CD8-positive, alpha-beta memory T cell (primary cell): ENCODE measurements at regions of chr14 and their contacts with region 1.

Region 1: DNA sequence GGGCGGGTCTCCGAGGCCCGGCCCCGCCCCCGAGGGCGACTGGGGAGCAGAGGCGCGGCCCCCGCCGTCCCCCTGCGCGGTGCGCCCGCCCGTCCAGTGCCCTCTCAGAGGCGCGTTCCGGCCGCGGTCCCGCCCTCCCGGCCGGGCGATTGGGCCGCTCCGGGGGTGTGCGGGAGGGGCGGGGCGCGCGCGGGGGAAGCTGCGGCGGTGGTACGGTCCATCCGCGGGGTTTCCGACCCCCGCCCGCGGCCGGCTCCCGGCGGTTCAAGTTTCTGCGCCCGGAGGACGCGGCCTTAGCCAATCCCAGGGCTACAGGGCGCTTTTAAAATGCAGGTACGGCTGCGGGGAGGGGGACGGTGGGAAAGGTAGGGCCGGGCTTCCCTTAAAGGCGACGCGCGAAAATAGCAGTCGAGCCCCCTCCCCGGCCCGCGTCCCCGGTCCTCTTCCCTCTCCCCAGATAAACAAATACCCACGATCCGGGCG is 317 bp upstream of the CCDC85C start:
- DNase-seq: peak; percentile 92 to 98 (median 96)
- H3K4me3 ChIP-seq: peak overlapping the region; percentile 66
- H3K4me3 Mint-ChIP-seq: peak overlapping the region; percentile 75 to 96 (median 91)
- H3K27ac ChIP-seq: peak overlapping the region; percentile 74
- H3K27ac Mint-ChIP-seq: peak overlapping the region; percentile 41 to 94 (median 90)
- H3K4me1 ChIP-seq: peaks cover 31% of the 10 kb centered on the region
- H3K4me1 Mint-ChIP-seq: peaks cover 30 to 38% (median 32%) of the 10 kb centered on the region in 3 donors
- H3K27me3 ChIP-seq: no peaks in the 10 kb centered on the region
- H3K27me3 Mint-ChIP-seq: no peaks in the 10 kb centered on the region

Region 2: GRCh38 chr14:99480917-99481744 is 123.2 kb before region 1 on chr14 and contains the start of gene CCNK:
- CTCF ChIA-PET with region 1: interaction called, 4 read pairs
- POLR2A ChIA-PET with region 1: interaction called, 18 read pairs
- DNase-seq: peak; percentile 100
- H3K4me3 ChIP-seq: peak within 1 kb of the TSS; percentile 91
- H3K4me3 Mint-ChIP-seq: peak within 1 kb of the TSS; percentile 97 to 100 (median 98)
- H3K27ac ChIP-seq: peak within 1 kb of the TSS; percentile 97
- H3K27ac Mint-ChIP-seq: peak within 1 kb of the TSS; percentile 95 to 99 (median 98)
- H3K4me1 ChIP-seq: peaks cover 41% of the 10 kb centered on the region
- H3K4me1 Mint-ChIP-seq: peaks cover 58 to 80% (median 70%) of the 10 kb centered on the region in 3 donors
- H3K27me3 ChIP-seq: no peaks in the 10 kb centered on the region
- H3K27me3 Mint-ChIP-seq: peaks cover 0 to 4% of the 10 kb centered on the region in 2 donors
- total RNA-seq, gene CCNK: 110 to 115 TPM

Region 3: GRCh38 chr14:99774556-99775307 is 170.4 kb after region 1 on chr14:
- CTCF ChIA-PET with region 1: no interaction called
- POLR2A ChIA-PET with region 1: no interaction called
- DNase-seq: no peak
- H3K4me3 ChIP-seq: no peak overlapping the region
- H3K4me3 Mint-ChIP-seq: no peak overlapping the region
- H3K27ac ChIP-seq: no peak overlapping the region
- H3K27ac Mint-ChIP-seq: peak overlapping the region in 1 of 8 donors; percentile 43
- H3K4me1 ChIP-seq: no peaks in the 10 kb centered on the region
- H3K4me1 Mint-ChIP-seq: no peaks in the 10 kb centered on the region
- H3K27me3 ChIP-seq: no peaks in the 10 kb centered on the region
- H3K27me3 Mint-ChIP-seq: peaks cover 23 to 63% of the 10 kb centered on the region in 2 donors